ENCODE measurements at regions of chr9 and their contacts with region 1.

Region 1: DNA sequence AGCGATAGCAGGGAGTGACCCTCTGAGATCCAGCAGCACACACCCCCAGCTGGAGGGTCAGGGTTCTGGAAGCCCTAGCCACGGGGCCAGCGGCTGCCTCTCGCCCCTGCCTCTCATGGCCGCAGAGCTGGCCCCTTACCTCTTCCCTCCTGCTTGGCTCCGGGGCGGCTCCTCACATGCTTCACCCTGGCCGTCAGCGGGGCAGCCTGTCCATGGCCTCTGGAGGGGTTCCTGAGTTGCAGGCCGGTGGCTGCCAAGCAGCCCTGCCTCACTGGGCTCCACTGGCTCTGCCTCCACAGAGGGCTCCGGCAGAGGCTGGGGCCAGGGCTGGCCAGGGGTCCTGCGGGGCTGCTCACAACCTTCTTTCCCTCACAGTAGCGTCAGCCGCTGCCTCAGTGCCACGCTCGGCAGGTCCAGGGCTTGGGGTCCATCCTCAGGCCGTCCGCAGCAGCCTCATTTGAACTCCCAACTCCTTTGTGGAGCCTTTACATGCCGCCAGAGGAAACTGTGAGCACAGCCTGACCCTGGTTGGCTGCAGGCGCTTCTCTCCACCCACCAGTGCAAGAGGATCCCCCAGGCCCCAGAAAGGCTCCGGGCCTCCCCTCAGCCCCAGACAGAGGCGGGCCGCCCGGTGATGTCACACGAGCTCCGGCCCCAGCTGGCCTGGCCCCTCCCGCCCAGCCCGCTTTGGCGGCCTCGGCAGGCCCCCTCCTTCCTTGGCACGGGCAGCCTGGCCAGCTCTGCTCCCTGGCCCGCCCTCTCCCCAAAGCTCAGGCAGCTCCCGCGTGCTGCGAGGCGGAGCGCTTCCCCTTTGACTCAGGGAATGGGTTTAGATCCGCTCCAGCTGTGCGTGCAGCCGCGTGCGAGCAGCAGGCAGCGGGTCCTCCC is at the start of gene ANGPTL2:
- DNase-seq: peak; percentile 92 to 96
- ATAC-seq: peak; percentile 87 to 93 (median 90)
- H3K4me3 ChIP-seq: peak within 1 kb of the TSS; percentile 91
- H3K27ac ChIP-seq: peak within 1 kb of the TSS; percentile 92
- H3K4me1 ChIP-seq: peaks cover 34% of the 10 kb centered on the region
- H3K27me3 ChIP-seq: no peaks in the 10 kb centered on the region
- CTCF ChIP-seq: no peak
- total RNA-seq, gene ANGPTL2: 12.6 to 208 (median 19.0) TPM

Region 2: GRCh38 chr9:126965541-126966428 is 156.6 kb before region 1 on chr9:
- intact Hi-C with region 1: loop called in 1 of 2 experiments (anchors 5 kb)
- DNase-seq: peak; percentile 39 to 68
- ATAC-seq: peak; percentile 84 to 92 (median 88)
- H3K4me3 ChIP-seq: no peak overlapping the region
- H3K27ac ChIP-seq: no peak overlapping the region
- H3K4me1 ChIP-seq: peaks cover 24% of the 10 kb centered on the region
- H3K27me3 ChIP-seq: no peaks in the 10 kb centered on the region
- CTCF ChIP-seq: peak; percentile 83

Region 3: DNA sequence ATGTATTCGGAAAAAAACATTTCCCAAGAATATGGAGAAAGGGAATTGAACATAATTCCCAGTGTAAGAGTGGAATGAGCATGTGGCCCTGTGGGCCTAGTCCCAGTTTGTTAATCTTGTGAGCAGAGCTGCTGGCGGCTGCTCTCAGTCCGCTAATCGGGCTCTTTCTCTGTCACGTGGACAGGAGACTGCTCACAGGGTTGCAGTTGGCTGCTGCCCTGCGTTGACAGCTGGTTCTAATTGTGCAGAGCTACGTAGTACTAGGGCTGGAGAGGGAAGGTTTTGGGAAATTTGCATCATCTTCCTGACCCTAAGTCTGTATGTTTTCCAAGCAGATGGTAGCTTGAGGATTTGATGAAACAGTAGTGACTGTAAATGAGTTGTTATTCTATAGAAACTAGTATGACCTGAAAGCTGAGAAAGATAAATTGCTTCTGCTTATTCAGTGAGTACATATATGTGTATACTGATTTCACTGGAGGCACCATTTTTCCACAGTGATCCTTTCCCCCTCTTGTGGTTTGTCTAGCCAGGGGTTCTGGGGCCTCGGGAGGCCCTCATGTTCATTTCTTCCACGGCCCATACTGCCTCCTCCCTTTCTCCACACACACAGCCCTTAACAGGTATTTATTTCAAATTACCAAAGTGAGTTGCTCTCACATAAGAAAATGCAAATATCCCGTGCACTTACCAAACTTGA is 100.6 kb before region 1 on chr9:
- intact Hi-C with region 1: loop called in 1 of 2 experiments (anchors 5 kb)
- DNase-seq: peak; percentile 89 to 93
- ATAC-seq: peak; percentile 94 to 98 (median 96)
- H3K4me3 ChIP-seq: no peak overlapping the region
- H3K27ac ChIP-seq: peak overlapping the region; percentile 76
- H3K4me1 ChIP-seq: peaks cover 43% of the 10 kb centered on the region
- H3K27me3 ChIP-seq: no peaks in the 10 kb centered on the region
- CTCF ChIP-seq: no peak

Region 4: GRCh38 chr9:127058011-127058644 is 64.3 kb before region 1 on chr9:
- intact Hi-C with region 1: loop called in 1 of 2 experiments (anchors 5 kb)
- DNase-seq: peak; percentile 43 to 76
- ATAC-seq: peak; percentile 77 to 89 (median 88)
- H3K4me3 ChIP-seq: no peak overlapping the region
- H3K27ac ChIP-seq: peak overlapping the region; percentile 63
- H3K4me1 ChIP-seq: peaks cover 40% of the 10 kb centered on the region
- H3K27me3 ChIP-seq: no peaks in the 10 kb centered on the region
- CTCF ChIP-seq: no peak